CD4-positive, alpha-beta memory T cell (primary cell): ENCODE measurements at regions of chr5 and their contacts with region 1.

Region 1: GRCh38 chr5:139787568-139788293 is 7.9 kb upstream of the PSD2 start:
- DNase-seq: peak; percentile 66 to 86 (median 80)
- H3K4me3 ChIP-seq: peak overlapping the region; percentile 73 to 87
- H3K4me3 Mint-ChIP-seq: peak overlapping the region; percentile 80 to 90 (median 88)
- H3K27ac ChIP-seq: no peak overlapping the region
- H3K27ac Mint-ChIP-seq: peak overlapping the region in 4 of 7 donors; percentile 12 to 71 (median 41)
- H3K4me1 ChIP-seq: peaks cover 10% of the 10 kb centered on the region
- H3K4me1 Mint-ChIP-seq: peaks cover 0 to 14% (median 5%) of the 10 kb centered on the region in 4 donors
- H3K27me3 ChIP-seq: no peaks in the 10 kb centered on the region
- H3K27me3 Mint-ChIP-seq: peaks cover 16 to 17% of the 10 kb centered on the region in 2 donors

Region 2: DNA sequence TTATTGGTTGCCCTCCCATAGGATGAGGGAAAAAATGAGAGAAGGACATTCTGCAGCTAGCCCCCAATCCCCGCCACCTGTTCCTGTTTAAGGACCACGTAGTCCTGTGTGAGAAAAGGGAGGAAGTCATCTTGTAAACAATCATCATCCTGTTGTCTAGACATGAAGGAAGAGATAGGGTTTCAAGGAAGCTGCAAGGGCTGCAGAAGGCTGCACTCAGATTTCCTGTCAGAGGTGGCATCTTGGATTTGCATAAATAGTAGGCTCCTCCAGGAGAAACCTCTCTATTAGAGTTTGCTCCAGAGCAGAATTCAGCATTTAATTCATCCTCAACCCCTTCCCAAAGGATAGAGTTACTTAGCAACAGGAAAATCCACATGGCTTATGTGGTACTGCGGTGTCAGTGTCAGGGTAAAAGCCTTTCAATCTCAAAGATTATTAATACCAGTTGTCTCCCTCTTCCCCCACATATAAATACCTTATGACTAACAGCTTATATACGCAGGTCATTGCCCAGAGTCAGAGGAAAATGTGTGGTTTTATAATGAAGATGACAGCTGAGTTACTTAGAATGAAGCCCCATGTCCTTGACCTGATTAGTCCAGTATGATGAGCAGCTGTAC is 343.8 kb before region 1 on chr5:
- CTCF ChIA-PET with region 1: no interaction called
- POLR2A ChIA-PET with region 1: no interaction called
- intact Hi-C with region 1: no loop called
- DNase-seq: peak in 3 of 5 donors; percentile 41 to 68 (median 52)
- H3K4me3 ChIP-seq: no peak overlapping the region
- H3K4me3 Mint-ChIP-seq: peak overlapping the region in 6 of 8 donors; percentile 64 to 85 (median 76)
- H3K27ac ChIP-seq: no peak overlapping the region
- H3K27ac Mint-ChIP-seq: peak overlapping the region; percentile 89 to 98 (median 93)
- H3K4me1 ChIP-seq: peaks cover 58% of the 10 kb centered on the region
- H3K4me1 Mint-ChIP-seq: peaks cover 40 to 85% (median 52%) of the 10 kb centered on the region in 4 donors
- H3K27me3 ChIP-seq: no peaks in the 10 kb centered on the region
- H3K27me3 Mint-ChIP-seq: no peaks in the 10 kb centered on the region

Region 3: GRCh38 chr5:139765409-139766217 is 22.1 kb before region 1 on chr5:
- CTCF ChIA-PET with region 1: interaction called, 10 read pairs
- POLR2A ChIA-PET with region 1: no interaction called
- intact Hi-C with region 1: no loop called
- DNase-seq: peak; percentile 78 to 87 (median 84)
- H3K4me3 ChIP-seq: peak overlapping the region; percentile 23 to 56
- H3K4me3 Mint-ChIP-seq: peak overlapping the region; percentile 25 to 72 (median 54)
- H3K27ac ChIP-seq: no peak overlapping the region
- H3K27ac Mint-ChIP-seq: peak overlapping the region in 5 of 7 donors; percentile 31 to 66 (median 52)
- H3K4me1 ChIP-seq: peaks cover 9% of the 10 kb centered on the region
- H3K4me1 Mint-ChIP-seq: peaks cover 5 to 8% (median 7%) of the 10 kb centered on the region in 4 donors
- H3K27me3 ChIP-seq: peaks cover 19% of the 10 kb centered on the region
- H3K27me3 Mint-ChIP-seq: peaks cover 19 to 33% of the 10 kb centered on the region in 2 donors

Region 4: GRCh38 chr5:139774980-139775661 is 12.6 kb before region 1 on chr5:
- CTCF ChIA-PET with region 1: interaction called, 24 read pairs
- POLR2A ChIA-PET with region 1: interaction called, 3 read pairs
- intact Hi-C with region 1: no loop called
- DNase-seq: peak; percentile 62 to 72 (median 66)
- H3K4me3 ChIP-seq: no peak overlapping the region
- H3K4me3 Mint-ChIP-seq: peak overlapping the region in 5 of 8 donors; percentile 9 to 51 (median 20)
- H3K27ac ChIP-seq: no peak overlapping the region
- H3K27ac Mint-ChIP-seq: no peak overlapping the region
- H3K4me1 ChIP-seq: no peaks in the 10 kb centered on the region
- H3K4me1 Mint-ChIP-seq: peaks cover 0 to 6% (median 3%) of the 10 kb centered on the region in 4 donors
- H3K27me3 ChIP-seq: no peaks in the 10 kb centered on the region
- H3K27me3 Mint-ChIP-seq: peaks cover 3 to 5% of the 10 kb centered on the region in 2 donors

Region 5: DNA sequence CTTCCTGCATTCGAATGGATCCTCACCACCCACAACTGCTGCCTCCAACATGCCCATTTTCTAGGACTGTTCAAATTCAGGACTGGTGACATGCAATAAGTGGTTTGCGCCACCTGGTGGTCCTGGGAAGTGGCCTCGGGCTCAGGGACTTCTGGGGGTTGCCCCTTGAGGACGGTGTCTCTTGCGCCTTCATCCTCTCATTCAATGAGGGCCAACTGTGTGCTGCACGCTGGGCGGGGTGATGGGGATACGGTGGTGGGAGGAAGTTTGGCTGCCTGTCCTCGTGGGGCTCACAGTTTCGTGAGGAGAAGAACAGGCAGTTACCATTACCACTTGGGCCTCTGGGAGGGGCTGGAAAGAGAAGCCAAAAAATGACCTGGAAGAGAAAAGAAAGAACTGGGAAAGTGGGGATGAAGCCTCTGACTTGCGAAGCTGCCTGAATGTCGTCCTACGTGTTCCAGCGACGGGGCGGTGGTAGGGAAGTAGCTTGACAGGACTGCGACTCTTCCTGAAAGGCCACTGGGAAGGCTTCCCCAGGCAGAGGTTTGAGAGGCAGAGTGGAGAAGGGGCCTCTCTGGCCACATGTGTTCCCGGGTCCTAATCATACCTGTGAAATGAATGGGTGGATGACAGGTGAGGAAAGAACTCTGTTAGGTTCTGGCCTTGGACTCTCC is 56.9 kb after region 1 on chr5:
- CTCF ChIA-PET with region 1: interaction called, 49 read pairs
- POLR2A ChIA-PET with region 1: interaction called, 4 read pairs
- intact Hi-C with region 1: loop called (anchors 1 kb)
- DNase-seq: peak; percentile 52 to 69 (median 54)
- H3K4me3 ChIP-seq: no peak overlapping the region
- H3K4me3 Mint-ChIP-seq: peak overlapping the region in 2 of 8 donors; percentile 44 to 78
- H3K27ac ChIP-seq: no peak overlapping the region
- H3K27ac Mint-ChIP-seq: peak overlapping the region in 3 of 7 donors; percentile 16 to 88 (median 20)
- H3K4me1 ChIP-seq: peaks cover 8% of the 10 kb centered on the region
- H3K4me1 Mint-ChIP-seq: peaks cover 4 to 20% (median 12%) of the 10 kb centered on the region in 4 donors
- H3K27me3 ChIP-seq: peaks cover 9% of the 10 kb centered on the region
- H3K27me3 Mint-ChIP-seq: peaks cover 5 to 20% of the 10 kb centered on the region in 2 donors

Region 6: GRCh38 chr5:139863855-139864558 is 76.3 kb after region 1 on chr5:
- CTCF ChIA-PET with region 1: interaction called, 87 read pairs
- POLR2A ChIA-PET with region 1: no interaction called
- intact Hi-C with region 1: no loop called
- DNase-seq: peak in 4 of 5 donors; percentile 14 to 49 (median 27)
- H3K4me3 ChIP-seq: no peak overlapping the region
- H3K4me3 Mint-ChIP-seq: no peak overlapping the region
- H3K27ac ChIP-seq: no peak overlapping the region
- H3K27ac Mint-ChIP-seq: no peak overlapping the region
- H3K4me1 ChIP-seq: no peaks in the 10 kb centered on the region
- H3K4me1 Mint-ChIP-seq: peaks cover 0 to 1% (median 0%) of the 10 kb centered on the region in 4 donors
- H3K27me3 ChIP-seq: no peaks in the 10 kb centered on the region
- H3K27me3 Mint-ChIP-seq: peaks cover 6 to 18% of the 10 kb centered on the region in 2 donors

Region 7: DNA sequence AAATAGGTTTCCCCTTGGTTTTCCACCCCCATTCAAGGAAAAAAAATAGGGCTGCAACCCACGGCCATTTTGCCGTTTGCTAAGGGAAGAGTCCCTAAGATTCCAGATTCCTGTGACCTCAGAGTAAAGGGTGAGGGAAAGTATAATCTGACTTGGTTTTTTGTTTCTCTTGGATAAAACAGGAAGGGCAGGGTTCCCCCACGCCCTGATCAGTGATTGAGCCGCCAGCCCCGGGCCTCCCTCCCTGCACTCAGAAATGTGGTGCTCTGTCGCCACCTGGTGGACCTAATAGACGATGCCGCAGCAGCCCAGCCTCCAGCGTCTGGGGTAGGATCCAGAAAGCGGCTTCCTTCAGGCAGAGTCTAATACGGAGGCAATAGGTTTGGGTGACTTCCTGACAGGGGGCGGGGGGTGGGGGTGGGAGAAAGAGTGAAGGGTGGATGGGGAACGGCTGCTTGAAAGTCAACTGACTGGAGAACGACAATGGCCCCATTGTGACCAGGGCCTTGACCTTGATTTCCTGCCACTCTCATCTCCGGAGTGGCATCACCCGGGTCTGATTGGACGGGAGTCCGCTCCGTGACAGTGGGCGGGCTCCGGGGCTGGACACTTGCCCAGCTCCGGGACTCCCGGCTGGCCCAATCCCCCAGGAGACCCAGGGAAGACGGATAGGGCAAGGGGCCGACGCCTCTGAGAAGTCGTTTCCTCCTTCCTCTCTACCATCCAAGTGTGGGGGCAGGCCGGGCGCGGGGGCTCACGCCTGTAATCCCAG is 369.5 kb after region 1 on chr5:
- CTCF ChIA-PET with region 1: interaction called, 3 read pairs
- POLR2A ChIA-PET with region 1: no interaction called
- intact Hi-C with region 1: loop called (anchors 1 kb)
- DNase-seq: peak; percentile 77 to 82 (median 82)
- H3K4me3 ChIP-seq: no peak overlapping the region
- H3K4me3 Mint-ChIP-seq: peak overlapping the region; percentile 52 to 79 (median 60)
- H3K27ac ChIP-seq: no peak overlapping the region
- H3K27ac Mint-ChIP-seq: peak overlapping the region in 6 of 7 donors; percentile 19 to 88 (median 30)
- H3K4me1 ChIP-seq: peaks cover 11% of the 10 kb centered on the region
- H3K4me1 Mint-ChIP-seq: peaks cover 2 to 15% (median 9%) of the 10 kb centered on the region in 4 donors
- H3K27me3 ChIP-seq: no peaks in the 10 kb centered on the region
- H3K27me3 Mint-ChIP-seq: no peaks in the 10 kb centered on the region